A673 (cell line): ENCODE measurements at regions of chr17 and their contacts with region 1.

Region 1: GRCh38 chr17:42056635-42057034 is 6.2 kb upstream of the C17orf113 start:
- DNase-seq: no peak
- H3K4me3 ChIP-seq: no peak overlapping the region
- H3K27ac ChIP-seq: no peak overlapping the region
- H3K4me1 ChIP-seq: no peaks in the 10 kb centered on the region
- H3K27me3 ChIP-seq: no peaks in the 10 kb centered on the region
- CTCF ChIP-seq: no peak

Region 2: DNA sequence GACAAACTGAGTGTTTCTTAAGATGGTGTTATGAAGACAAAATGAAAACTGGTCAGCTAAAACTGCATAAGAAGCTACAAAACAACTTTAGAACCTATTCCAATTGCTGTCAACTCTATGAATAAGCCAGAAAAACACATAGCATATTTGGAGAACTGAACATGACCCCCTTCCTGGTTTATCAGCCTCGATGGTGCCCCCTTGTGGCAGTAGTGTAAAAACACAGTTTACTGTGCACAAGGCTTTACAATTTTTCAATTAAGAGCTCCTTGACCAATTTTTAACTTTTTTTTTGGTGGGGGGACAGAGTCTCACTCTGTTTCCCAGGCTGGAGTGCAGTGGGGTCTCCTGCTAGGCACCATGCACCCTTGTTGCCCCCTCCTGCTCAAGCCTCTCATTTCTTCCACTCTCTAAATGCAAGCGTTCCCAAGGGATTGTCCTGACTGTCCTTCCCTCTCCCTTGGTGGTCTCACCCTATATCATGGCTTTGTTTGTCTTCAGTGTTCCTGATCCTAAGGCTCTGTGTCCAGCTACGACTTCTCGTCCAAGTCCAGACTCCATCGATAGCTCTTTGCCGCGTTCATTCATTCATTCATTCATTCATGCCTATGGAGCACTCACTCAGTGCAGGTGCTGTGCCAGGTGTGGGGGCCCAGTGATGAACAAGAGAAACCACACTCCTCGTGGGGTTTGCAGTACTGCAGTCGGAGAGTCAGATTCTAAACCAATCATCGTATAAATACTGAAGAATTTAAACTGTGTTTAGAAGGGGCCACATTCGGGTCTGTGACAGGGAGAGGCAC is 360.5 kb before region 1 on chr17:
- CTCF ChIA-PET with region 1: no interaction called
- POLR2A ChIA-PET with region 1: no interaction called
- intact Hi-C with region 1: no loop called
- DNase-seq: peak; percentile 75
- H3K4me3 ChIP-seq: no peak overlapping the region
- H3K27ac ChIP-seq: no peak overlapping the region
- H3K4me1 ChIP-seq: peaks cover under 1% of the 10 kb centered on the region
- H3K27me3 ChIP-seq: no peaks in the 10 kb centered on the region
- CTCF ChIP-seq: peak; percentile 65

Region 3: DNA sequence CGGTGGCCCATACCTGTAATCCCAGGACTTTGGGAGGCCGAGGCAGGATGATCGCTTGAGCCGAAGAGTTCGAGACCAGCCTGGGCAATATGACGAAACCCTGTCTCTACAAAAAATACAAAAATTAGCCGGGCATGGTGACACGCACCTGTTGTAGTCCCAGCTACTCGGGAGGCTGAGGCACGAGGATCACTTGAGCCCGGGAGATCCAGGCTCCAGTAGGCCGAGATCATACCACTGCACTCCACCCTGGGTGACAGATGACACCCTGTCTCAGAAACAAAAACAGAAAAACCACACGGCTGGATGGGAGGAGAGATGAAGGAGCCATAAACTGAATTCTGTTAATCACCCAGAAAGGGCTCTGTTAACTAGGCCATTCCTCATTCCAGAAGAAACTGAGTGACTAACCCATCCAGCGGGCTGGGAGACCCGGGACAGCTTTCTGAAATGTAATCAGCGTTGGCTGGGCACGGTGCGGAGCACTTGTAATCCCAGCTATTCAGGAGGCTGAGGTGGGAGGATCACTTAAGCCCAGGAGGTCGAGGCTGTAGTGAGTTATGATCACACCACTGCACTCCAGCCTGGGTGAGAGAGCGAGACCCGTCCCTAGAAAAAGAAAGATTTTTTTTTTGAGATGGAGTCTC is 220.0 kb before region 1 on chr17:
- CTCF ChIA-PET with region 1: no interaction called
- POLR2A ChIA-PET with region 1: no interaction called
- intact Hi-C with region 1: no loop called
- DNase-seq: no peak
- H3K4me3 ChIP-seq: peak overlapping the region; percentile 74
- H3K27ac ChIP-seq: no peak overlapping the region
- H3K4me1 ChIP-seq: no peaks in the 10 kb centered on the region
- H3K27me3 ChIP-seq: no peaks in the 10 kb centered on the region
- CTCF ChIP-seq: no peak

Region 4: DNA sequence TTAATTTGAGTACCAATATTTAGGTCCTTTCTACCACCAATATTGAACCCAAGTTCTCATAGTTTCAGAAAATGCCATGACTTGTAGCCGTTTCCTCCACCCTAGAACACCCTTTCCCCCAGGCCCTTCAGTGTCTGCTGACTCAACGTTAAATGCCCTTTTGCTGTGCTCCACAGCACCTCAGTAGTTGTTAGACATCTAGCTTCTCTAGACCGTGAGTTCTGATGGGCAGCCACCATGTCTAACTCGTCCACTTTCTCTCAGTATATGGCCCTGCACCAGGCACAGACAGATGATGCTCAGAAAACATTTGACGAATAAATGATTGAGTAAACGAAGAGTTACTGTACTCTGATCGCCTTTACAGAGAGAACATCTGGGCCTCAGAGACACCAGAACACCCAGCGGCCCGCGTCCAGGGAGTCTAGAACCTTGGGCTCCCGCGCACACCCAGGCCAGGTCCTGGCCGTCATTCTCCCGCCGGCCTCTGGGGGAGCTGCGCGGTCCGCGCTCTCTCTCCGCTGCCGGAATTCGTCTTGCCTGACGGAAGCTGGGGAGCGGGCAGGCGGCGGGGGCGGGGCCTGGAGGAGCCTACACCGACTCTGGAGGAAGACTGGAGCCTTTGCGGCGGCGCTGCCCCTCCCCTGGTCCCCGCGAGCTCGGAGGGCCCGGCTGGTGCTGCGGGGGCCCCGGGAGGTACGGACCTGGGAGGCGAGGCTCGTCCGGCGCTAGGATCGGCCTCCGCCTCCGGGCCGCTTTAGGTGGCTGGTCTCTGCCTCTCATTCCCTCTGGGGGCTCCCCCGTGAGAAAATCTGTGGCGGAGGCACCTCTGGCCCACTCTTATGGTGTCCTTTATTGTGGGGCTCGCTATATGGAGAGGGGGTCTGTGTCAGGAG is 36.9 kb before region 1 on chr17 and contains the start of gene NKIRAS2:
- CTCF ChIA-PET with region 1: no interaction called
- POLR2A ChIA-PET with region 1: no interaction called
- intact Hi-C with region 1: no loop called
- DNase-seq: peak; percentile 87
- H3K4me3 ChIP-seq: peak within 1 kb of the TSS; percentile 82
- H3K27ac ChIP-seq: peak within 1 kb of the TSS; percentile 84
- H3K4me1 ChIP-seq: no peaks in the 10 kb centered on the region
- H3K27me3 ChIP-seq: no peaks in the 10 kb centered on the region
- CTCF ChIP-seq: peak; percentile 75
- total RNA-seq, gene NKIRAS2: 25.4 and 28.7 TPM in 2 replicates

Region 5: DNA sequence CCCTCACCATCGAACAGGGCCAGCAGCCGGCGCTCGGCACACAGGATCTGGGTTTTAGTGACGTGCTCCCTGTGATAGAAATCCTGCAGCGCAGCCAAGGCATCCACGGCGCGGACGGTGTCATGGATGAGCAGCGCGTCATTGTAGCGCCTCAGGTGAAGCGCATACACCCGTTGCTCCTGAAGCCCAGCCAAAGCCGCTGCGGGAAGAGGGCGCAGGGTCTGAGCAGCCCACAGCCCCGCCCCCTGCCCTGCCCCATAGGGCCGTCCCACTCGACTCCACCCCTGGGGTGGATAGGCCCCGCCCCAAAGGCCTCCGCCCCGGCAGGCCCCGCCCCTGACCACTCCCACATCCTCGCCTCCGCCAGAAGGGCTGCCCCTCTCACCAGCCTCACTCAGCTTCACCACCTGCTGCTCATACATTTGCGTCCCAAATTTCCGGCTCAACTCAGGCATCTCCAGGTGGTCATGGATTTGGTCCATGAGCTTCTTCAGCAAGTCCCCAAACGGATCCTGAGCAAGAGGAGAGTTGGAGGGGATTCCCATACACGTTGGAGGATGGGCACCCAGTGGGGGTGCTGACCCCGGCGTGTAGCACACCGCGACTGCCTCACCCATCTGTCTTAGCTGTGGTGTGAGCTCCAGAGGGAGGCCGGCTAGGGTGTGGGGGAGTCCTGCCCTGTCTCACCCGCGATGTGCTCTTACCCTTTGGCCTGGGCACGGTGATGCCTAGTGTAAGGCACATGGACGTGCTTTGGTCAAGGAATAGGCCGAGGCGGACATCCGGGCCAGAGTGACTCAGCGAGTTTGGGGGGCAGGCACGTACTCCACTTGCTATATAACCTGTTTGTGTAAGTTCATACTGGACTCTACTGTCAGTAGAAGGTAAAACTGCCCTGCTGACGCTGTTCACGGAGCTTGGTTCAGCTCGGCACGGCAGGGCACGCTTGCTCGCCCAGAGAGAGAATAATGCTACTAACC is 51.3 kb after region 1 on chr17:
- CTCF ChIA-PET with region 1: no interaction called
- POLR2A ChIA-PET with region 1: no interaction called
- intact Hi-C with region 1: no loop called
- DNase-seq: peak; percentile 45
- H3K4me3 ChIP-seq: no peak overlapping the region
- H3K27ac ChIP-seq: no peak overlapping the region
- H3K4me1 ChIP-seq: no peaks in the 10 kb centered on the region
- H3K27me3 ChIP-seq: no peaks in the 10 kb centered on the region
- CTCF ChIP-seq: no peak

Region 6: GRCh38 chr17:42411361-42411760 is 354.7 kb after region 1 on chr17:
- CTCF ChIA-PET with region 1: no interaction called
- POLR2A ChIA-PET with region 1: interaction called, 16 read pairs
- intact Hi-C with region 1: no loop called
- DNase-seq: no peak
- H3K4me3 ChIP-seq: no peak overlapping the region
- H3K27ac ChIP-seq: no peak overlapping the region
- H3K4me1 ChIP-seq: peaks cover 17% of the 10 kb centered on the region
- H3K27me3 ChIP-seq: no peaks in the 10 kb centered on the region
- CTCF ChIP-seq: no peak